Naive thymus-derived CD8-positive, alpha-beta T cell (primary cell): ENCODE measurements at regions of chr19 and their contacts with region 1.

Region 1: GRCh38 chr19:9796113-9796773 is 22.6 kb downstream of the FBXL12 start:
- DNase-seq: peak; percentile 61 to 94 (median 86)
- ATAC-seq: peak; percentile 40 to 54
- H3K4me3 Mint-ChIP-seq: peak overlapping the region in 2 of 10 donors; percentile 28 to 65
- H3K27ac Mint-ChIP-seq: peak overlapping the region; percentile 81 to 98 (median 91)
- H3K4me1 Mint-ChIP-seq: peaks cover 9 to 34% (median 29%) of the 10 kb centered on the region in 4 donors
- H3K27me3 Mint-ChIP-seq: no peaks in the 10 kb centered on the region

Region 2: DNA sequence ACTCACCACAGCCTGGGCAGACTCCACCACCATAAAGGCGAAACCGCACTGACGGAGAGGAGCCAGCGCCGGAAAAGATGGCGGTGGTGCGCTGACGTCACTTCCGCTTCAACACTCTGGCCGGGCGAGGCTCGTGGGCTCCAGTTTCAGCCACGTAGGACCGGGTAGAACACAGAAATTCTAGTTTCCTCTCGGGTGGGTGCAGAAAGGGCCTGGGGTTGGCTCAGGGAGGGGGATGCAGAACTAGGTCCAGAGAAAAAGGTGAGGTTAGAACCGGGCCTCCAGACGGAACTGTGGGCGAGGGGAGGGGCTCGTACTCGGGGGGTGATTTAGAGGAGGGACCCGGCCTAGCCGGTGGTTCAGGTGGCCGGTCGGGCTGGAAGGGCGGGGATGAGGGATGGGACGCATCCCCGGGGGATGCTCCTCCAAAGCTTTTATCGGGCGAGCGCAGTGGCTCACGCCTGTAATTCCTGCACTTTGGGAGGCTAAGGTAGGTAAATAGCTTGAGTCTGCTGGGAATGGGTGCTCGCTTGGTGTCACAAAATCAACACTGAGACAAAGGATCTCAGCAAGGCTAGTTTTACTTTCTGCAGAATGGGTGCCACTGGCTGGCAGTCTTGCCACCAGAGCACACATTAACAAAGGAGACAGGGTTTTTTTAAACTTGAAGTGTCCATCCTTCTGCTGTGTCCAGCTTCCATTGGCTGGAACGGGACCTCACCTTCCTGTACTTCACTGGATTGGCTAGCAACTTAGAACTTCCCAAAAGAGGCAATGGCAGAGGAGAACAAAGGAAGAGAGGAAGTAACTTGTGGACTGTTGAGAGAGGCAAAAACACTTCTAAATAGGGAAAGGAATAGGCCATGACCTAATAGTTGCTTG is 174.8 kb before region 1 on chr19 and contains the start of gene ZNF561:
- POLR2A ChIA-PET with region 1: interaction called, 10 read pairs
- DNase-seq: peak; percentile 77 to 95 (median 91)
- ATAC-seq: peak; percentile 93 to 95
- H3K4me3 Mint-ChIP-seq: peak within 1 kb of the TSS; percentile 93 to 100 (median 98)
- H3K27ac Mint-ChIP-seq: peak within 1 kb of the TSS; percentile 99 to 100 (median 100)
- H3K4me1 Mint-ChIP-seq: peaks cover 12 to 38% (median 34%) of the 10 kb centered on the region in 4 donors
- H3K27me3 Mint-ChIP-seq: peaks cover 0 to 4% (median 0%) of the 10 kb centered on the region in 5 donors
- polyA plus RNA-seq, gene ZNF561: 12.2 to 16.3 (median 14.7) TPM

Region 3: DNA sequence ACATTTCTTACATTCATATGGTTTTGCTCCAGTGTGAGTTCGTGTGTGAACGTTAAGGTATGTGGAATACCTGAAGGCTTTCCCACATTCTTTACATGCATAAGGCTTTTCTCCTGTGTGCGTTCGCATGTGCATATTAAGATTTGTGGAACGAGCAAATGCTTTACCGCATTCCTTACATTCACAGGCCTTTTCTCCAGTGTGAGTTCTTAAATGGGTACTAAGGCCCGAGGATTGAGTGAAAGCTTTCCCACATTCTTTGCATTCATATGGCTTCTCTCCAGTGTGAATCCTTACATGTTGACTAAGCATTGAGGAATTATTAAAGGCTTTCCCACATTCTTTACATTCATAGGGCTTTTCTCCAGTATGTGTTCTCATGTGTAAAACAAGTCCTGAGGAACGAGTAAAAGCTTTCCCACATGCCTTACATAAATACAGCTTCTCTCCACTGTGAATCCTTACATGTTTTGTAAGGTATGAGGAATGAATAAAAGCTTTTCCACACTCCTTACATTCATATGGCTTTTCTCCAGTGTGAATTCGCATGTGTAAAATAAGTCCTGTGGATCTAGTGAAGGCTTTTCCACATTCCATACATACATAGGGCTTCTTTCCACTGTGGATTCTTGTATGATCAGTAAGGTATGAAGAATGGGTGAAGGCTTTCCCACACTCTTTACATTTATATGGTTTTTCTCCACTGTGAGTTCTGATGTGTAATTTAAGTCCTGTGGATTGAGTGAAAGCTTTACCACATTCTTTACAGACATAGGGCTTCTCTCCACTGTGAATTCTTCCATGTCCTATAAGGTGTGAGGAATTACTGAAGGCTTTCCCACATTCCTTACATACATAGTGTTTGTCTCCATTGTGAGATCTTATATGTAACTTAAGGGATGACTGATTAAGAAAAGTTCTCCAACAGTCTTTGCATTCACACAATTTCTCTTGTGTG is 38.4 kb before region 1 on chr19:
- POLR2A ChIA-PET with region 1: no interaction called
- DNase-seq: no peak
- ATAC-seq: no peak
- H3K4me3 Mint-ChIP-seq: no peak overlapping the region
- H3K27ac Mint-ChIP-seq: no peak overlapping the region
- H3K4me1 Mint-ChIP-seq: no peaks in the 10 kb centered on the region
- H3K27me3 Mint-ChIP-seq: no peaks in the 10 kb centered on the region

Region 4: GRCh38 chr19:9808855-9809824 is 12.9 kb after region 1 on chr19:
- POLR2A ChIA-PET with region 1: interaction called, 10 read pairs
- DNase-seq: peak in 8 of 10 donors; percentile 19 to 73 (median 42)
- ATAC-seq: peak; percentile 92 to 97
- H3K4me3 Mint-ChIP-seq: peak overlapping the region in 9 of 10 donors; percentile 18 to 86 (median 53)
- H3K27ac Mint-ChIP-seq: peak overlapping the region; percentile 87 to 97 (median 91)
- H3K4me1 Mint-ChIP-seq: peaks cover 14 to 48% (median 32%) of the 10 kb centered on the region in 4 donors
- H3K27me3 Mint-ChIP-seq: no peaks in the 10 kb centered on the region

Region 5: DNA sequence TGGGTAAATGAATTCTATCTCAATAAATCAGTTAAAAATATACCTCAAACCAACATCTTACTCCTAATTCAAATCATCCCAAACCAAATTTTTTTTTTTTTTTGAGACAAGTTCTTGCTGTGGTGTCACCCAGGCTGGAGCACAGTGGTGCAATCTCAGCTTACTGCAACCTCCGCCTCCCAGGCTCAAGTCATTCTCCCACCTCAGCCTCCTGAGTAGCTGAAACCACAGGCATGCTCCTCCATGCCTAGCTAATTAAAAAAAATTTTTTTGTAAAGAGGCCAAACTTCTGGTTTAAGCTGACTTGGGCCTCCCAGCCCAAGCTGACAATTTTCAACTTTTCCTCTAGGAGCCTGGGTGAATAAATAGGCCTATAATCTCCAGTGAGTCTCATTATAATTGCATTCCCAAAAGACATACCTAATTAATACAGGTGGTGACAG is 162.2 kb after region 1 on chr19:
- POLR2A ChIA-PET with region 1: no interaction called
- DNase-seq: no peak
- ATAC-seq: no peak
- H3K4me3 Mint-ChIP-seq: no peak overlapping the region
- H3K27ac Mint-ChIP-seq: no peak overlapping the region
- H3K4me1 Mint-ChIP-seq: no peaks in the 10 kb centered on the region
- H3K27me3 Mint-ChIP-seq: peaks cover 6 to 42% (median 17%) of the 10 kb centered on the region in 5 donors